ENCODE measurements at regions of chr10 and their contacts with region 1.

Region 1: GRCh38 chr10:100998991-100999741 is 442 bp upstream of the LZTS2 start:
- DNase-seq: peak; percentile 87
- ATAC-seq: peak; percentile 59
- H3K4me3 Mint-ChIP-seq: peak overlapping the region; percentile 76
- H3K27ac Mint-ChIP-seq: peak overlapping the region; percentile 81
- H3K4me1 Mint-ChIP-seq: peaks cover 20% of the 10 kb centered on the region
- H3K27me3 Mint-ChIP-seq: no peaks in the 10 kb centered on the region

Region 2: GRCh38 chr10:100462709-100463108 is 536.5 kb before region 1 on chr10 and contains the start of gene WNT8B:
- CTCF ChIA-PET with region 1: no interaction called
- POLR2A ChIA-PET with region 1: no interaction called
- intact Hi-C with region 1: no loop called
- DNase-seq: no peak
- ATAC-seq: no peak
- H3K4me3 Mint-ChIP-seq: no peak within 1 kb of the TSS
- H3K27ac Mint-ChIP-seq: no peak within 1 kb of the TSS
- H3K4me1 Mint-ChIP-seq: no peaks in the 10 kb centered on the region
- H3K27me3 Mint-ChIP-seq: no peaks in the 10 kb centered on the region
- total RNA-seq, gene WNT8B: 0.40 to 0.43 TPM

Region 3: GRCh38 chr10:100535715-100536353 is 463.3 kb before region 1 on chr10 and contains the start of gene HIF1AN:
- CTCF ChIA-PET with region 1: no interaction called
- POLR2A ChIA-PET with region 1: no interaction called
- intact Hi-C with region 1: loop called in 1 of 2 experiments (anchors 1 kb)
- DNase-seq: peak; percentile 93
- ATAC-seq: peak; percentile 96
- H3K4me3 Mint-ChIP-seq: no peak within 1 kb of the TSS
- H3K27ac Mint-ChIP-seq: no peak within 1 kb of the TSS
- H3K4me1 Mint-ChIP-seq: peaks cover 27% of the 10 kb centered on the region
- H3K27me3 Mint-ChIP-seq: no peaks in the 10 kb centered on the region
- total RNA-seq, gene HIF1AN: 45.9 to 50.8 TPM

Region 4: DNA sequence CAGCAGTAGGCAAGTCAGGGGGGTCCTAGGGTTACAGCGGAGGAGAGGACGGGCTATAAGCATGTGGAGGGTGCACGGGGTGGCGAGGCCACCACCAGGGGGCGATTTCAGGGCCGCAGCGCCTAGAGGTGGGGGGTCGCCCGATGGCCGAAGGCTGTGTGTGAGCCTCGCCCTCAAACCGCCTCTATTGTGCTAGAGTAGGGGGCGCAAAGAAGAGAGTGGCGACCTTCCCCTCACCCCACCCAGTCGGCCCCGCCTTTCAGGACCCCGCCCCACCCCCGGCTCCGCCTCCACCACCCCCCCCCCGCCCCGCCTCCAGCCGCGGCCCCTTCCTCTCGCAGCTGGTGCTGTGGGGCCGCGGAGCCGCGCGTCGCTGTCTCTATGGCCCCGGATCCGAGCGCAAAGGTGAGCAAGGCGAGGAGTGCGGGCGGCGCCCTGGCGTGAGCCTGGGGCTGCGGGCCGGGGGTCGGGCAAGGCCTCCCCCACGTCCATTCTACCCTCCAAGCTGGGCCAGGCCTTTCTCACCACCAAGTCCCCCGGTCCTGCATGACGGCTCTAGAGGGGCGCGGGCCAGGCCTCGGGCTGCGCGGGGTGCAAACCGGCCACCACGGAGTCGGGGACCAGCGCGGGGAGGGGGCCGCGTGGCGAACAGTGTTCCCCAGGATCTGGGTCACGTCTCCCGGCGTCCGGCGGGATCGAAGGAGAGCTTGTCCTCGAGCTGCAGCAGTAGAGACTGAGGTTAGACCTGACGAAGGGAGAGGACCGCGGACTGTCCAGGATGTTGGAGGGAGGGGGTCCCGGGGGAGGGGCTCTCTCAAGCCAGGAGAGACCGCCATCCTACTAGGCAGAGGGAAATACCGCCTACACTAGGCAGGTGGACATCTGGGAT is 29.7 kb before region 1 on chr10 and contains the start of gene SEMA4G:
- CTCF ChIA-PET with region 1: interaction called, 4 read pairs
- POLR2A ChIA-PET with region 1: no interaction called
- intact Hi-C with region 1: loop called in 1 of 2 experiments (anchors 2 kb)
- DNase-seq: peak; percentile 62
- ATAC-seq: peak; percentile 81
- H3K4me3 Mint-ChIP-seq: peak within 1 kb of the TSS; percentile 41
- H3K27ac Mint-ChIP-seq: no peak within 1 kb of the TSS
- H3K4me1 Mint-ChIP-seq: peaks cover 13% of the 10 kb centered on the region
- H3K27me3 Mint-ChIP-seq: no peaks in the 10 kb centered on the region
- total RNA-seq, gene SEMA4G: 0.62 to 0.84 TPM

Region 5: GRCh38 chr10:101012525-101013364 is 13.6 kb after region 1 on chr10:
- CTCF ChIA-PET with region 1: interaction called, 73 read pairs
- POLR2A ChIA-PET with region 1: no interaction called
- intact Hi-C with region 1: loop called (anchors 1 kb)
- DNase-seq: peak; percentile 90
- ATAC-seq: peak; percentile 85
- H3K4me3 Mint-ChIP-seq: no peak overlapping the region
- H3K27ac Mint-ChIP-seq: no peak overlapping the region
- H3K4me1 Mint-ChIP-seq: peaks cover 22% of the 10 kb centered on the region
- H3K27me3 Mint-ChIP-seq: peaks cover 25% of the 10 kb centered on the region

Region 6: DNA sequence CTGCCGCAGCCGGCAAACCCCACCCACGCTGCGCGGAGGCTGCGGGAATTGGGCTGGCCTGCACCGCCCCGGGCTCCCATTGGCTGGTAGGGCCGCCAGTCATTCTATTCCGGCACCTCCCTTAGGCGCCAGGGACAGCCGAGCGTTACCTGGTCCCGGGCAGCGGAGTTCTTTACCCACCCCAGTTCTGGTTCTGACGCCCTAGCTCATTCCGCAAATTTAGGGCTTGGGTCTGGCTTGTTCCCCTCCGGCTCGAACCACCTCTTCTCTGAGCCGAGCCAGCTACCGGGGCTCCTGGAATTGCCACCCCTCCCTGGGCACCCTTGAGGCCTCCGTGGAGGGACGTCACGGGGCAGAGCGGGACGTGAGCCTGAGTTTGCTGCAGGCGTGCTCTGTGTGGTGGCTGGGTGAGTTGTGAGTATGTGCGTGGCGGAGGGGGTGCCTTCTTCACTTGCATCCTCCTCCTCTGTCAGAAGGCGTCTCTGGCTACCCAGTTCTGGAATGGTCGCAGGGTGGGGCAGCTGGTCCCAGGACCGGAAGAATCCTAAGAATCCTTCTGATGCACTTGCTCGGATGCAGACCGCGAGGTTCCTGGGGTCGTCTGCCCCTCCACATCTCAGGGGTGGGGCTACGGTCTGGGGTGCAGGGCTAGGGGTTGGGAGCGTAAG is 32.1 kb after region 1 on chr10 and contains the starts of genes PDZD7 and SFXN3:
- CTCF ChIA-PET with region 1: interaction called, 4 read pairs
- POLR2A ChIA-PET with region 1: no interaction called
- intact Hi-C with region 1: loop called in 1 of 2 experiments (anchors 1 kb)
- DNase-seq: peak; percentile 98
- ATAC-seq: peak; percentile 85
- H3K4me3 Mint-ChIP-seq: peak within 1 kb of the TSS; percentile 80
- H3K27ac Mint-ChIP-seq: peak within 1 kb of the TSS; percentile 82
- H3K4me1 Mint-ChIP-seq: peaks cover 22% of the 10 kb centered on the region
- H3K27me3 Mint-ChIP-seq: no peaks in the 10 kb centered on the region
- total RNA-seq, gene PDZD7: 0.28 to 0.32 TPM
- total RNA-seq, gene SFXN3: 30.0 to 37.7 TPM

Region 7: DNA sequence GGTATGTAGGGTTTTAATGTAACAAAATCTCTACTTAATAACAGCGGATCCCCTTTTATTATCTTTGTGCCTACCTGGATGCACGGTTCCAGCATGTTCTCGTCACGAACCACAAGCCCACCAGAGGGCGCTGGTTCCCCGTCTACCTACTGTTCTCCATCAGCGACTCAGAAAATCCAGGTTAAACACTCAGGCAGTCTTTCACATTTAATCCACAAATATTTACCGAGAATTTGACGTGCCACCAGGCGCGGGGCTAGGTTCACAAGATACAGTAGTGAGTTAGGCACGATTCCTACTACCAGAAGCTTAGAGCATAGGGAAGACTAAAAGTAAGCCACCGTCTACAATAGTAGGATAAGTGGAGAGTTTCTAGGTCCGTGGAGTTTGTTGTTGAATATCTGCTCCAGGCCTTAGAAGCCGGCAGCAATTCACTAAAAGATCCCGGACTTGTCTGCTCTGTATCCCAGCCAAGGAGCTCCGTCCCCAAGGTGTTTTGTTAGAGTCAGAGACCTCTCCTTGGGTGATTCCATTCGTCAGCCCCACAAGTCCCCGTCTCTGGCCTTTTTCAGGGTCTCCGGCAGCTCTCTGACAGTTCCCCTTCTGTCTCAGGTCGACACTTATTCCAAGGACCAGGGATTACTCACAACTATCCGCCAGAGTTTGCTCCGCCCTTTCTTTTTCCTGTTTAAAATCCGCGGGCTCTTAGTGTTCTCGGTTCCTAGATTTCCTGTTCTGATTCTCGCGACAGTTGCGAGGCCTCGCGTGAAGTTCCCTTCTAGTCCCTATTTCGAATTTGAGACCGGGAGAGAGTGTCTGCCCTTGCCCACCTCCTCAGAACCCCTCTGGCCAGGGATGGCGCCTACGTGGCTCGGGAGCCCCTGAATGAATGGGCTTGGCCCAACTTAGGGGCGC is 61.1 kb after region 1 on chr10:
- CTCF ChIA-PET with region 1: interaction called, 8 read pairs
- POLR2A ChIA-PET with region 1: no interaction called
- intact Hi-C with region 1: loop called in 1 of 2 experiments (anchors 1 kb)
- DNase-seq: peak; percentile 95
- ATAC-seq: peak; percentile 75
- H3K4me3 Mint-ChIP-seq: peak overlapping the region; percentile 82
- H3K27ac Mint-ChIP-seq: peak overlapping the region; percentile 96
- H3K4me1 Mint-ChIP-seq: peaks cover 22% of the 10 kb centered on the region
- H3K27me3 Mint-ChIP-seq: peaks cover 22% of the 10 kb centered on the region